H1 (cell line): ENCODE measurements at regions of chr6 and their contacts with region 1.

Region 1: GRCh38 chr6:111565326-111566221 is 40.1 kb downstream of the TRAF3IP2 start:
- DNase-seq: no peak
- H3K4me3 ChIP-seq: no peak overlapping the region
- H3K27ac ChIP-seq: no peak overlapping the region
- H3K4me1 ChIP-seq: peaks cover 0 to 8% (median under 1%) of the 10 kb centered on the region in 4 experiments; a peak in 2 of 7 replicates
- H3K27me3 ChIP-seq: no peaks in the 10 kb centered on the region
- CTCF ChIP-seq: peak; percentile 39 to 79 (median 73); a peak in 3 of 4 replicates
- EP300 ChIP-seq: no peak
- POLR2A ChIP-seq: no peak
- RAD21 ChIP-seq: peak; percentile 43 to 60; a peak in 3 of 4 replicates

Region 2: GRCh38 chr6:111353912-111354462 is 211.6 kb before region 1 on chr6:
- CTCF ChIA-PET with region 1: no interaction called
- POLR2A ChIA-PET with region 1: no interaction called
- DNase-seq: no peak
- H3K4me3 ChIP-seq: no peak overlapping the region
- H3K27ac ChIP-seq: no peak overlapping the region
- H3K4me1 ChIP-seq: no peaks in the 10 kb centered on the region
- H3K27me3 ChIP-seq: peaks cover 0 to 2% (median 0%) of the 10 kb centered on the region in 4 experiments; a peak in 1 of 7 replicates
- CTCF ChIP-seq: no peak
- EP300 ChIP-seq: no peak
- POLR2A ChIP-seq: no peak
- RAD21 ChIP-seq: no peak

Region 3: GRCh38 chr6:111478749-111479148 is 86.8 kb before region 1 on chr6:
- CTCF ChIA-PET with region 1: interaction called, 14 read pairs
- POLR2A ChIA-PET with region 1: interaction called, 5 read pairs
- DNase-seq: no peak
- H3K4me3 ChIP-seq: no peak overlapping the region
- H3K27ac ChIP-seq: no peak overlapping the region
- H3K4me1 ChIP-seq: peaks cover 0 to 12% (median 6%) of the 10 kb centered on the region in 4 experiments; a peak in 4 of 7 replicates
- H3K27me3 ChIP-seq: peaks cover 32 to 74% (median 50%) of the 10 kb centered on the region in 4 experiments
- CTCF ChIP-seq: peak in 2 of 3 experiments; percentile 37 to 51; a peak in 2 of 4 replicates
- EP300 ChIP-seq: peak in 1 of 2 experiments; percentile 74; a peak in 1 of 3 replicates
- POLR2A ChIP-seq: no peak
- RAD21 ChIP-seq: peak; percentile 64 to 69

Region 4: DNA sequence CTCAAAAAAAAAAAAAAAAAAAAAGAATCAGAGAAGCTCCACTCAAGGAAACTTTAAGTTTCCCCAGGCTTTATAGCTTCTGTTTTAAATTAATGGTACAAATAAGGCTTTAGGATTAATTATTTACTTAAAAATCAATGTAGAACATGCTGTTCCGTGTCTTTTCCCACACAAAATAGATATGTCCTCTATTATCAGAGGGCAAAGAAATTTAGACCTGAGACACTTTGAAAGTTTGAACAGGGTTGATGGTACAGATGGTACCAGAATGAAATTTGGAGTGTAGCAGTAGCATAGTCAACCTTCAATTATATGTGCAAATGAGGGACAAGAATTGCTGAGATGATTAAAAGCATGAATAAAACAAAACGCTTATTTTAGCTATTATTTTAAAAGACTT is 50.3 kb before region 1 on chr6:
- CTCF ChIA-PET with region 1: no interaction called
- POLR2A ChIA-PET with region 1: no interaction called
- DNase-seq: no peak
- H3K4me3 ChIP-seq: no peak overlapping the region
- H3K27ac ChIP-seq: no peak overlapping the region
- H3K4me1 ChIP-seq: 0 out of 7 replicates have a peak, but pooled peaks cover 0 to 2% (median 0%) of the 10 kb centered on the region in 4 experiments
- H3K27me3 ChIP-seq: no peaks in the 10 kb centered on the region
- CTCF ChIP-seq: no peak
- EP300 ChIP-seq: no peak
- POLR2A ChIP-seq: no peak
- RAD21 ChIP-seq: no peak

Region 5: GRCh38 chr6:111527367-111527766 is 38.2 kb before region 1 on chr6:
- CTCF ChIA-PET with region 1: interaction called, 10 read pairs
- POLR2A ChIA-PET with region 1: no interaction called
- DNase-seq: no peak
- H3K4me3 ChIP-seq: no peak overlapping the region
- H3K27ac ChIP-seq: no peak overlapping the region
- H3K4me1 ChIP-seq: peaks cover 0 to 6% (median 4%) of the 10 kb centered on the region in 4 experiments; a peak in 4 of 7 replicates
- H3K27me3 ChIP-seq: no peaks in the 10 kb centered on the region
- CTCF ChIP-seq: no peak
- EP300 ChIP-seq: no peak
- POLR2A ChIP-seq: no peak
- RAD21 ChIP-seq: no peak

Region 6: DNA sequence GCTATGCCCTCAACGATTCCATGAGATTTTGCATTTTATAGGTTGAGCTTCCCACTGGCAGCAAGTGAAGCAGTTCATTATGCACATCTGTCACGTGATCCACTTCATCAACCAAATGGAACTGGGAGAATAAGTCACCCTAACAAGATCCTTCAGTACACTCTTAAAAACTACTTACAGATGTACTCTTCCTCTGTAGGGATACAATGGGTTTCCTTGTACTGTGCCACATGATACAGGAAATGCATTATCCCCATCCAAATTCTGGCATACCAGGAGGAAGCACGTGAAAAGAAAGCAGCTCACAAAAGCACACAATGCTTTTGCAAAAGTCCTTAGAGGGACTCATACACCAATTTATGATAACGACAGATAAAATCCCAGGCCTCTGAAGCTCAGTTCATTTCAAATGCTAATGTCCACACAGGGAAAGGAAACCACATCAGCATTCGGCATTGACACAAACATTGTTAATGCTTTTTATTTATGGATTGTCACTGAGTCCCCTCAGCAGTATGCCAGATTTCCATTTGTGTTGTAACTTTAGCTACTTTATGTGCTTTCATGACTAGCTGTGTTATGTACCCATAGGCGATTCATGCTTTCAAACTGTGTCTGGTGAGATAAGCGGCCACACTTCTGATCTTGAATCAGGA is 24.4 kb before region 1 on chr6:
- CTCF ChIA-PET with region 1: interaction called, 14 read pairs
- POLR2A ChIA-PET with region 1: no interaction called
- DNase-seq: no peak
- H3K4me3 ChIP-seq: no peak overlapping the region
- H3K27ac ChIP-seq: no peak overlapping the region
- H3K4me1 ChIP-seq: peaks cover 2 to 11% (median 8%) of the 10 kb centered on the region in 4 experiments; a peak in 3 of 7 replicates
- H3K27me3 ChIP-seq: no peaks in the 10 kb centered on the region
- CTCF ChIP-seq: no peak
- EP300 ChIP-seq: no peak
- POLR2A ChIP-seq: no peak
- RAD21 ChIP-seq: no peak

Region 7: DNA sequence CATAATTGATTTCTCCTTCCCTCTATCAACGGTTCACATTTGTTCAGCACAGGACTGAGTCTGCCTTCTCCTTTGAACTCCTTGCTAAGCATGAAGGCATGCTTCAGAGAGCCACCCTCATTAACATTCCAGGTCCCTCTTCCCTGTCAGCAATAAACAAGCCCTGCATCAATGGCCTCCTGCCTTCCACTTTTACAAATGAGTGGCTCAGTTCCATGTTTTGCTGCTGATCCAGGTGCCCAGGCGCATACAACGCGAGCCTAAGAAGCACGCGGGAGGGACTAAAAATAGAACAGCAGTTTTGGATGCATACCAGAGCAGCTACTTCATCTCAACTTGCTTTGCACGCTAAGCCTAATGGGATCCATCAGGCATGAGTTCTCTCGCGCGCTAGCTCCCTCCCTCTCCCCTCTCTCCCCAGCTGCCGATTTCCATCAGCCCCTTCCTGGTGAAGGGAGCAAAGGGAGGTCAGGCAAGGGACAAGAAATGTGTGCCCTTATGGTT is 13.3 kb before region 1 on chr6:
- CTCF ChIA-PET with region 1: interaction called, 33 read pairs
- POLR2A ChIA-PET with region 1: no interaction called
- DNase-seq: peak in 1 of 2 experiments; percentile 51
- H3K4me3 ChIP-seq: peak overlapping the region in 1 of 4 experiments; percentile 32; a peak in 1 of 8 replicates
- H3K27ac ChIP-seq: no peak overlapping the region
- H3K4me1 ChIP-seq: peaks cover 4 to 17% (median 5%) of the 10 kb centered on the region in 4 experiments; a peak in 6 of 7 replicates
- H3K27me3 ChIP-seq: no peaks in the 10 kb centered on the region
- CTCF ChIP-seq: no peak
- EP300 ChIP-seq: no peak
- POLR2A ChIP-seq: 0 out of 3 replicates have a peak, but pooled peaks of 1 of the 2 experiments have one; percentile 22
- RAD21 ChIP-seq: no peak

Region 8: DNA sequence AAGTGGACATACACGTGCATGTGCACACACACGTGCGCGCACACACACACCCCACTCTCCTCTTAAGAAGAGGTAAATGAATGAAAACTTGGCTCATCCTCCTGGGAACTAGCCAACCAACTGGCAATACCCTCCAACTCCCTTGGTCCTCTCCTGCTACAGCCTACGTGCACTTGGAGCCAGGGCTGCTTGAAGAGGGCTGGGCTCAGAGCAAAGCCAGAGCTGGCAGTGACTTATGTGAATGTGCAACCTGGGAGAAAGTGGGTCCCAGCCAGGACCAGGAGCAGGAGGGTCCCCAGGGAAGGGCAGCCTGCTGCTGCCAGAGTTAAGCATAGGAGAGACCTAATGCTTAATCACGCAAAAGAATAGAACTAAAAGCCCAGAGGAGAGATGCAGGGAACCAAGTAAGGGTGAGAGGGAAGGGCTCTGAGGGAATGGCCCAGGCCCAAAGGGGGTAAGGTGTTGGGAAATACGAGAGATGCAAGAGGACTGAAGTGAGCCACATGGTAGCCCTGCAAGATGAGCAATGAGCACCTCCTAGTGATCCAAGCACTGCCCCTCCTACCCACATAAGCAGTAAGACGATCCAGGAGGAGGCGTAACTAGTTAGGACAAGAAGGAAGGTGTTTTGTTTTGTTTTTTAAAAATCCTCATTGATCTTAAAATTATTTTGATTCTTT is 15.4 kb after region 1 on chr6:
- CTCF ChIA-PET with region 1: interaction called, 13 read pairs
- POLR2A ChIA-PET with region 1: interaction called, 4 read pairs
- DNase-seq: no peak
- H3K4me3 ChIP-seq: no peak overlapping the region
- H3K27ac ChIP-seq: no peak overlapping the region
- H3K4me1 ChIP-seq: no peaks in the 10 kb centered on the region
- H3K27me3 ChIP-seq: no peaks in the 10 kb centered on the region
- CTCF ChIP-seq: peak; percentile 22 to 58 (median 58)
- EP300 ChIP-seq: no peak
- POLR2A ChIP-seq: no peak
- RAD21 ChIP-seq: peak; percentile 69 to 71

Region 9: GRCh38 chr6:111651185-111652034 is 85.8 kb after region 1 on chr6:
- CTCF ChIA-PET with region 1: interaction called, 10 read pairs
- POLR2A ChIA-PET with region 1: no interaction called
- DNase-seq: no peak
- H3K4me3 ChIP-seq: no peak overlapping the region
- H3K27ac ChIP-seq: no peak overlapping the region
- H3K4me1 ChIP-seq: peaks cover 0 to 3% (median 0%) of the 10 kb centered on the region in 4 experiments; a peak in 2 of 7 replicates
- H3K27me3 ChIP-seq: no peaks in the 10 kb centered on the region
- CTCF ChIP-seq: no peak
- EP300 ChIP-seq: no peak
- POLR2A ChIP-seq: no peak
- RAD21 ChIP-seq: no peak